PC-3 (cell line): ENCODE measurements at regions of chr9 and their contacts with region 1.

Region 1: DNA sequence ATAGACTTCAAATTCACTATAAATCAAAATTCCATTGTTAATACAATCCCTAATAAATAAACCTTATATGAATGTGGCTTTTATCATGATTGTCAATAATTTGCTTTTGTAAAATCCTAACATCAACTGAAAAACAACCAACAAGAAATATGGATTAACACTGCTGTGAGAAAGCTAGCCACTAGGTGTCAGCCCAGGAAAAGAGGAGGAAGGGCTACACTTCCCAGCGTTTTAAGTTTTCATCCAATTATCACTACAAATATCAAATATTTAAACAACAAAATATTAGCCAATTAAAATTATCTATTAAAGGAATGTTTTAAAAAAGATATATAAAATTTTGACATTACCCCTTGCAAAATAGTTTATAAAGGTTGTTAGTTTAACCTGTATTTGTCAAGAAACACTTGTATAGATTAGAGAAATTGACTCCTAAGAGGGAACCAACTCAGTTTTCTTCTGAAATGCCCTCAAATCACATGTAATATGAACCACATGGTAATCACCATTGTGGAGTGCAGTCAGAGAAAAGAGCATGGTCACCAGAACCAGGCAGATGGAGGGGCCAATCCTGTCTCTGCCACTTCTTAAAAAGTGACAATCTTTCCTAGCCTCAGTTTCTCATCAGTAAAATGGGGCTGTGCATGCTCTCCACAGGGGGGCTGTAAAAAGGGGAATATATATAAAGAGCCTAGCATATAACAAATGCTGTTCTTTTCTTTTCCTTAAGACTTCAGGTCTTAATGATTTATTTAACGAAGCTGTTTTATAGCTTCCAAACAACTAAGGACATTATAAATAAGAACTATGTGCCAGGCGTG is 188.2 kb downstream of the CRB2 start:
- DNase-seq: peak; percentile 42
- ATAC-seq: peak; percentile 49
- H3K4me3 ChIP-seq: no peak overlapping the region
- H3K27ac ChIP-seq: no peak overlapping the region
- H3K4me1 ChIP-seq: no peaks in the 10 kb centered on the region
- H3K27me3 ChIP-seq: no peaks in the 10 kb centered on the region
- CTCF ChIP-seq: peak; percentile 82

Region 2: DNA sequence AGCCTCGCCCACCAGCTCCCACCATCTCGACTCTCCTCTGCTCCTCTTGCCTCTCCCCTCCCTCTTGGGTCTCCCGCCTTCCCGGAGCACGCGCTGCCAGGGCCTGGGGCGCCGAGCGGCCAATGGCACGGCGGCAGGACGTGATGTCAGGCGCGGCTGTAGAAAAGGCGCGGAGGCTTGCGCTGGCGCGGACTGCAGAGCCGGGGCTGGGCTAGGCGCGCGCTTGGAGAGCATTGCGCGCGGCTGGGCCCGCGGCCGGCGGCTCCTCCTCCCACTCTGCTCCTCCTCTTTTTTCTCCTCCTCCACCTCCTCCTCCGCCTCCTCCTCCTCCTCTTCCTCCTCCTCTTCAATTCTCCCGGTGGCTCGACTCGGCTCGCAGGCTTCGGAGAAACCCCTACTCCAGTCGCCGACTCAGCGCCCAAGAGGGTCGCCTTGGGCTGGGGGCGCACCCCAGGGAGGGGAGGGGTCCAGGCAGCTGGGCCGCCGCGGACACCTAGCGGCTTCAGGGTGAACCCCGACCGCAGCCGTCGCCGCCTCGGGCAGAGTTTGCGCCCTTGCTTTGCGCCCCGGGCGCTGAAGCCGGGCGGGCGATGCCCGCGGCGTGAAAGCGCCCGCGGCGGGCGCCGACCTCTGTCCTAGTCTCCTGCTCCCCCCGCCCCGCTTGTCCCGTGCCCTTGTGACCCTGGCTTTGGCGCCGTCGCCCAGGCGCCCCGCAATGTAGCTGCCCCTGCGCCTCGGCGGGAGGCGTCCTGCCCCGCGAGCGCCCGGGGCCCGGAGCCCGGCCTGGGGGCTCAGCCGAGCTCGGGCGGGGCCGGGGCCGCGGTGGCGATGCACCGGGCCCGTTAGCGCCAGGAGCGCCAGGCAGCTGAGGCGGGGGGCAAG is 467.4 kb after region 1 on chr9 and contains the start of gene LHX2:
- CTCF ChIA-PET with region 1: no interaction called
- POLR2A ChIA-PET with region 1: interaction called, 6 read pairs
- intact Hi-C with region 1: loop called (anchors 10 kb)
- DNase-seq: peak; percentile 65
- ATAC-seq: peak; percentile 89
- H3K4me3 ChIP-seq: peak within 1 kb of the TSS; percentile 51
- H3K27ac ChIP-seq: no peak within 1 kb of the TSS
- H3K4me1 ChIP-seq: peaks cover 14% of the 10 kb centered on the region; the same call in 1 of the 2 replicates
- H3K27me3 ChIP-seq: peaks cover 43% of the 10 kb centered on the region
- CTCF ChIP-seq: no peak
- total RNA-seq, gene LHX2: 1.1 TPM in 2 replicates

Region 3: GRCh38 chr9:124110307-124110915 is 566.2 kb after region 1 on chr9:
- CTCF ChIA-PET with region 1: interaction called, 4 read pairs
- POLR2A ChIA-PET with region 1: no interaction called
- intact Hi-C with region 1: loop called (anchors 10 kb)
- DNase-seq: peak; percentile 66
- ATAC-seq: no peak
- H3K4me3 ChIP-seq: no peak overlapping the region
- H3K27ac ChIP-seq: no peak overlapping the region
- H3K4me1 ChIP-seq: no peaks in the 10 kb centered on the region
- H3K27me3 ChIP-seq: no peaks in the 10 kb centered on the region
- CTCF ChIP-seq: no peak